Left ventricle myocardium superior (tissue), 1 donor: ENCODE measurements at regions of chr18 and their contacts with region 1.

Region 1: GRCh38 chr18:45722899-45723298 is 1.1 kb upstream of the SLC14A1 start:
- DNase-seq: peak; percentile 79
- ATAC-seq: peak; percentile 60

Region 2: GRCh38 chr18:45839414-45840395 is 116.8 kb after region 1 on chr18:
- intact Hi-C with region 1: loop called (anchors 10 kb)
- DNase-seq: no peak
- ATAC-seq: peak; percentile 72

Region 3: DNA sequence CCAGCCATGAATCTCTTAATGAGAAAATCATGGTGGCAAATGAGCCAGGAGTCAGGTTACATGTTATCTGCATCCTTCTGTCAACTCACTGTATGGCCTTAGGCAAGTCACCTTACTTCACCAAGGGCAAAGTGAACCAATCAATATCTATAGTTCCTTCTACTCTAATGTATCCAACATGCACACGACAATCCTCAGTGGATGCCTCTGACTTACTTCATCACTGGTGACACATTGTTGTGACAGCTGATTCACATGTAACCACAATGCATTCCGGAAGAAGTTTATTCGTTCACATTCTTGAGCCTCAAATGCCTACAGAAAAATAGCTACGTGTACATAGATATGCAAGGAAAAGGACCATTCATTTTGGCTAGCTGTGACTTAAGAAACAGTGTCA is 270.5 kb after region 1 on chr18:
- intact Hi-C with region 1: no loop called
- DNase-seq: no peak
- ATAC-seq: no peak

Region 4: DNA sequence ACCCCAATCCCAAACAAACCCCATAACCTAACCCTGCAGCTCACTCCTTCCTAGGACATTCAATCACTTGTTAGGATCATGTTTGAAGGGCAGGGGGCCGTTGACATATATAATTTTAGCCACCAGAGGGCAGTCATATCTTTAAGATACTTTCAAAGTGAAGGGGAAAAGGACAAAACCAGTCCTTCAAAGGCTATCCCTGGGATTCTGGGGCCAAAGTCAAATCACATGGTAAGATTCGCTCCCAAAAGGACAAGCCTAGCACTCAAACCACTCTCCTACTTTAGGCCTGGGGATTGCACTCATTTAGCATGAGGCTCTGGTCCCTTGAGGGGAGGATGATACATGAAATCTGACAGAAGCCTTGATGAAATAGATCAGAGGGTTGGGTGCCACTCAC is 425.9 kb after region 1 on chr18:
- intact Hi-C with region 1: no loop called
- DNase-seq: no peak
- ATAC-seq: peak; percentile 57